CD4-positive, alpha-beta T cell (primary cell): ENCODE measurements at regions of chr17 and their contacts with region 1.

Region 1: GRCh38 chr17:36948717-36949460 is at the start of gene AATF:
- DNase-seq: peak; percentile 89 to 99 (median 95)
- ATAC-seq: peak; percentile 93
- H3K4me3 ChIP-seq: peak within 1 kb of the TSS; percentile 81
- H3K4me3 Mint-ChIP-seq: peak within 1 kb of the TSS; percentile 88
- H3K27ac ChIP-seq: peak within 1 kb of the TSS; percentile 62 to 74
- H3K27ac Mint-ChIP-seq: peak within 1 kb of the TSS; percentile 84
- H3K4me1 ChIP-seq: peaks cover 36% of the 10 kb centered on the region
- H3K4me1 Mint-ChIP-seq: peaks cover 70% of the 10 kb centered on the region
- H3K27me3 ChIP-seq: peaks cover 29 to 34% of the 10 kb centered on the region in 2 experiments
- H3K27me3 Mint-ChIP-seq: peaks cover 46% of the 10 kb centered on the region
- CTCF ChIP-seq: no peak
- total RNA-seq, gene AATF: 40.3 to 40.8 TPM

Region 2: DNA sequence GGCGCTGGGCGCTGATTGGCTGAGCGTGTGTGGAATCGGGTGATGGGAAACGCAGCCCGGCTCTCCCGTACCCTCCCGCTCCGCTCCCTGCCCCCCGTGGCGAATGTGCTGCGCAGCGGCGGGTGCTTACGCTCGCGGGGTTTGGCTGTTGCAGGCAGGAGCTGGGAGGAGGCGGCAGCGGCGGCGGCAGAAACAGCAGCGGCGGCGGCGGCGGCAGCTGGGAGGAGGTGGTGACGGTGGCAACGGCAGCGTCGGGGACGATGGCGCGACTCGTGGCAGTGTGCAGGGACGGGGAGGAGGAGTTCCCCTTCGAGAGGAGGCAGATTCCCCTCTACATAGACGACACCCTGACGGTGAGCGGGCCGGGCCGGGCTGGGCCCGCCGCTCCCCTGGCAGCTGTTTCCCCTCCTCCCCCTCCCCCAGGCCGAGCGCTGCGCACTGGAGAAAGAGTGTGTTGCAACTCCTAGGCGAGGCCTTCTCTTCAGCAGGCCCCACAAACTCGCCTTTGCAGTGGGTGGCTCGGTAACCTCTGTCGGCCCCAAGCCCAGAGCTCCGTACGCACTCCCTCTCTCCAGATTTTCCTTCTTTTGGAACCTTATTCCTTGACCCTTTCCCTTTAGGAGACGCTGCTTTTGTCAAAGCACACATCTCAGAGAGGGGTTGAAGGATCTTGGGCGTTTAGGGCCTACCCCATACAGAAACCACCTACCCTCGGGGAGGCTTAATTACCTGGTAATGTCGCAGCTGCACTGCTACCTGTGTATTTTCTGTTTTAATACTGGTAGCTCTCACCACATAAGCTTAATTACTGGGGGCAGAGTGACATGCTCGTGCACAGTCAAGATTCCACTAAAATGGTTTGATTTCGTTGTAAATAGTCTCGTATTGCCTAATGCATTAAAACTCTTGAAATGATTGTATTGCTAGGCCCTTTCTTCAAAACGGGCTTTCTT is 403.1 kb before region 1 on chr17:
- CTCF ChIA-PET with region 1: no interaction called
- POLR2A ChIA-PET with region 1: interaction called, 6 read pairs
- intact Hi-C with region 1: loop called in 1 of 2 experiments (anchors 2 kb)
- DNase-seq: peak; percentile 92 to 99 (median 96)
- ATAC-seq: peak; percentile 80
- H3K4me3 ChIP-seq: peak overlapping the region; percentile 99
- H3K4me3 Mint-ChIP-seq: peak overlapping the region; percentile 97
- H3K27ac ChIP-seq: peak overlapping the region; percentile 72 to 99
- H3K27ac Mint-ChIP-seq: peak overlapping the region; percentile 97
- H3K4me1 ChIP-seq: peaks cover 39% of the 10 kb centered on the region
- H3K4me1 Mint-ChIP-seq: peaks cover 53% of the 10 kb centered on the region
- H3K27me3 ChIP-seq: no peaks in the 10 kb centered on the region
- H3K27me3 Mint-ChIP-seq: no peaks in the 10 kb centered on the region
- CTCF ChIP-seq: no peak

Region 3: GRCh38 chr17:36722121-36722902 is 226.6 kb before region 1 on chr17:
- CTCF ChIA-PET with region 1: no interaction called
- POLR2A ChIA-PET with region 1: interaction called, 8 read pairs
- intact Hi-C with region 1: loop called (anchors 1 to 2 kb)
- DNase-seq: peak; percentile 62 to 89 (median 80)
- ATAC-seq: peak; percentile 97
- H3K4me3 ChIP-seq: peak overlapping the region; percentile 63
- H3K4me3 Mint-ChIP-seq: peak overlapping the region; percentile 87
- H3K27ac ChIP-seq: peak overlapping the region; percentile 73 to 75
- H3K27ac Mint-ChIP-seq: peak overlapping the region; percentile 97
- H3K4me1 ChIP-seq: peaks cover 44% of the 10 kb centered on the region
- H3K4me1 Mint-ChIP-seq: peaks cover 66% of the 10 kb centered on the region
- H3K27me3 ChIP-seq: no peaks in the 10 kb centered on the region
- H3K27me3 Mint-ChIP-seq: no peaks in the 10 kb centered on the region
- CTCF ChIP-seq: no peak

Region 4: GRCh38 chr17:36937966-36938565 is 10.8 kb before region 1 on chr17:
- CTCF ChIA-PET with region 1: interaction called, 3 read pairs
- POLR2A ChIA-PET with region 1: interaction called, 16 read pairs
- intact Hi-C with region 1: loop called in 1 of 2 experiments (anchors 2 kb)
- DNase-seq: peak in 4 of 14 experiments; percentile 20 to 47 (median 36)
- ATAC-seq: peak; percentile 16
- H3K4me3 ChIP-seq: peak overlapping the region; percentile 10
- H3K4me3 Mint-ChIP-seq: peak overlapping the region; percentile 79
- H3K27ac ChIP-seq: no peak overlapping the region
- H3K27ac Mint-ChIP-seq: no peak overlapping the region
- H3K4me1 ChIP-seq: peaks cover 97% of the 10 kb centered on the region
- H3K4me1 Mint-ChIP-seq: peaks cover 70% of the 10 kb centered on the region
- H3K27me3 ChIP-seq: peaks cover 96 to 99% of the 10 kb centered on the region in 2 experiments
- H3K27me3 Mint-ChIP-seq: peaks cover 85% of the 10 kb centered on the region
- CTCF ChIP-seq: no peak

Region 5: DNA sequence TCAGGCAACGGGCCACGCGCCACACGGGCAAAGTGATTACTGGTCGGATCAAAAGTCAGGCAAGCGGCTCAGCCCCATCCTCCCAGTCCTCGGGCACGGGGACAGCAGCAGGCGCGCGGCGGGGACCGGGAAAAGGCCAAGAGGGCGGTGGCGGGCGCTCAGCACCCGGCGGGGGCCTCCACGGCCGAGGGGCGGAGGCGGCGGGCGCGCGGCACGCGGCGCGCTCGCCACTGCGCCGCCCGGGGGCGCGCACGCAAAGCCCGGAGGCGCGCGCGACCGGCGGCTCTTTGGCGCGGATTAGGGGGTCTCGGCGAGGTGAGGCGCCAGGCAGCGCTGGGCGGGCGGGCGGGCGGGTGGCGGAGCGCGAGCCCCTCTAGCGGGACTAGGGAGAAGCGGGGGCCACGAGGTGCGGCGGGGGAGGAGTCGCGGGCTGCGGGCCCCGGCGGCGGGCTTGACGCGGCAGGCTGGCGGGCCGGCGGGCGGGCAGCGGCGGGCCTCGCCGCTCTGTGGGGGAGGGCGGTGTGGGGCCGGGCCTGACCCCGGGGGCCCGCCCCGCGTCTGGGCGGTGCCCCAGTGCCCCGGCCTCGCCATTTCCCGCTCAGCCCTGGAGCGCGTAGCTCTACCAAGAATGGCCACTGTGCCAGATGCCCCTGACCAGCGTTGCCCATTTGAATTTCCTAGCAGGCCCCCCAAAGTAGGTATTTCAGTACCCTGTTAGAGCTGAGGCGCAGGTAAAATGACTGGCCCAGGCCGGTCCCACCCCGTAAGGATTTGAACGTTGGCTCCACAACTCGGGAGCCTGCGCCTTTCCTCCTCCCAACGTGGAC is 458.0 kb after region 1 on chr17 and contains the starts of genes ACACA and TADA2A:
- CTCF ChIA-PET with region 1: no interaction called
- POLR2A ChIA-PET with region 1: no interaction called
- intact Hi-C with region 1: loop called in 1 of 2 experiments (anchors 5 kb)
- DNase-seq: peak; percentile 43 to 89 (median 64)
- ATAC-seq: peak; percentile 87
- H3K4me3 ChIP-seq: peak within 1 kb of the TSS; percentile 96
- H3K4me3 Mint-ChIP-seq: peak within 1 kb of the TSS; percentile 99
- H3K27ac ChIP-seq: peak within 1 kb of the TSS; percentile 36 to 52
- H3K27ac Mint-ChIP-seq: peak within 1 kb of the TSS; percentile 92
- H3K4me1 ChIP-seq: peaks cover 27% of the 10 kb centered on the region
- H3K4me1 Mint-ChIP-seq: peaks cover 48% of the 10 kb centered on the region
- H3K27me3 ChIP-seq: no peaks in the 10 kb centered on the region
- H3K27me3 Mint-ChIP-seq: no peaks in the 10 kb centered on the region
- CTCF ChIP-seq: no peak
- total RNA-seq, gene ACACA: 26.0 to 28.9 TPM
- total RNA-seq, gene TADA2A: 6.7 to 8.0 TPM